Head of caudate nucleus (tissue), 42 donors: ENCODE measurements at regions of chr15 and their contacts with region 1.

Region 1: DNA sequence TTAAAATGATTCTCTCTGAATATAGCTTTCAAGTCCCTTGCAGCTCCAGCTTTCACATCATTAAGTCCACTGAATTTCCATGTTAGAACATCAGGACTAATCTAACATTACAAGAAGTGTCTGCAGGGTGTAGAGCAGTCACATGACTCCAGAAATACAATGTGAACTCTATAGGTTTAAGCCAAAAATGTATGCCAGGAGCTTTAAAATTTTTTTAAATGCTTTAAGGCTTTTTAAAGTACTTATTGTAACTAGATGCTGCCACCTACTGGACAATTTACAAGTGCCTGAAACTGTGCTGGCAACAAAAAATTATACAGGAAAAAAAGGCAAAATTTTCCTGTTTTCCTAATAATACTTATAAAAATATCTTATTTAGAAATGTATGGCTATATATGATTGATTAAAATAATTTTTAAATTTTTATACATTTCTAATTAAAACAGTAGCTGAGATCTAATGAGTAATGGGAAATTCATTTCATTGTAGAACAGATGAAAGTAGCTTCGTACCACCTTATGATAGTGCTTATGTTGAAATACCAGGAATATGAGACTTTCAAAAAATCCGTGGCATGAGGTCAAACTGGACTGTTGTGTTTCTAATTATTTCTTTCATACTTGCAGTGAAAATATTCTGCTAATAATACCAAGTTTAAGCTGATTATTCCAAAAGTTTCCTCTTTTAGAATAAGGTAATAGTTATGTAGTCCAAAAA is 25.7 kb downstream of the FSIP1 start:
- DNase-seq: peak in 10 of 42 donors; percentile 16 to 66 (median 24)

Region 2: DNA sequence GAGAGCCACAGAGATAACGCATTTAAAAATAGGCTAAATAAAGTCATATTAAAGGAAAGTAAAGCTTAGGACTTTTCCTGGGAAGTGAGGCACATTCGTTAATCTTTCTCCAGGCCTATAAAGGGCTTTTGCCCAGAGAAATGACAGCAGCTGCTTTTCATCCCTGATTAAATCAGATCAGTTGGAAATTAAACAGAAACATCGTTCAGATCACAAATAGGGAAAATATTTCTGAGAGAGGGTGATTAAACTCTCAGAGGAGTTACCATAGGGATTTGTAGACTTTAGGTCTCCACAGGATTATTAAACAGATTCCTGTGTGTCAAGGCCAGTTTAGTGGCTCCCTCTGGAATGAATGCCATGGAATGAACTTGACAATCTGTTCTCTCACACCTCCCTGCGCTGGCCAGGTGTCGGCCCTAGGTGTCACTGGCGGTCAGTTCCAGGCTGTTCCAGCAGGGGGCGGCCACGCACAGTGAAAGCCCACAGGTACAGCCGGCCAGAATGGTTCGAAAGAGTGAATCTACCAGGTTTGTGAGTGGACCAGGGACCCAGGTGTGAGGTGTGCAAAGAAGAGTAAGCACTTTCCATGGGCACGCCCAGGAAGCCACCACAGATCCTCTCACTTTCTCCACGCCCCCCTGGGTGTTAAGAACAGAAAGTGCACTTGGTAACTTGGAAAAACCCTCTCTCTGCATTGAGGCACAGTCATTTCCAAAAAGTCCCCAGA is 939.4 kb before region 1 on chr15:
- intact Hi-C with region 1: loop called (anchors 10 kb)
- DNase-seq: peak; percentile 56 to 91 (median 84)

Region 3: DNA sequence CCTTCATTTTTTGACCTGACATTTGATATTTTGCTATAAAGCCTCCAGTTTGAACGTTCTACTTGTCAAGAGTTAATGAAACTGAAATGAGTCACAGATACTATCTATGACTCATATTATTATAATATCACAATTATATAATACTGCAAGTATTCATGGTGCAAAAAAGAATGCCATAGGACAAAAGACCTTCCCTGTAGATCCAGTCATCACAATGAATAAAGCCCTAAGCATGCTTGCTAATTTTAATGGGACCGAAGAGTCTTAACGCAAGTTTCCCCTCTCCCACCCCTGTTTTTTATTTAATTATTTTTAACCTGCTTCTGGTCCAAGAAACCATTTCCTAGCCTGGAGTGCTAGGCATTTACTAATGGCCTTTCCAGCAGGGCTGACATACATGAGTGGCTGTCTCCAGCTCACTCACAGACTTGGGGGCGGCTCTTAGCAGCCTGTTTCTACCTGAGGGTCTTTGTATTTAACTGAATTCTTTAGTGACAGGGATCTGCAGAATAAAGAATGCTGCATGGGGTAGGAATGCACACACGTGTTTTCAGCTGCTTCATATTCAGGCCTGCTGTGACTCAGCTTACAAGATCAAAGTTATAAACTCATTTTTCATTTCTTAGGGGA is 114.8 kb before region 1 on chr15:
- intact Hi-C with region 1: no loop called
- DNase-seq: no peak

Region 4: GRCh38 chr15:39686000-39686613 is 70.9 kb before region 1 on chr15:
- intact Hi-C with region 1: loop called (anchors 5 kb)
- DNase-seq: peak in 28 of 42 donors; percentile 7 to 78 (median 44)